Aorta (tissue), 5 donors: ENCODE measurements at regions of chr12 and their contacts with region 1.

Region 1: DNA sequence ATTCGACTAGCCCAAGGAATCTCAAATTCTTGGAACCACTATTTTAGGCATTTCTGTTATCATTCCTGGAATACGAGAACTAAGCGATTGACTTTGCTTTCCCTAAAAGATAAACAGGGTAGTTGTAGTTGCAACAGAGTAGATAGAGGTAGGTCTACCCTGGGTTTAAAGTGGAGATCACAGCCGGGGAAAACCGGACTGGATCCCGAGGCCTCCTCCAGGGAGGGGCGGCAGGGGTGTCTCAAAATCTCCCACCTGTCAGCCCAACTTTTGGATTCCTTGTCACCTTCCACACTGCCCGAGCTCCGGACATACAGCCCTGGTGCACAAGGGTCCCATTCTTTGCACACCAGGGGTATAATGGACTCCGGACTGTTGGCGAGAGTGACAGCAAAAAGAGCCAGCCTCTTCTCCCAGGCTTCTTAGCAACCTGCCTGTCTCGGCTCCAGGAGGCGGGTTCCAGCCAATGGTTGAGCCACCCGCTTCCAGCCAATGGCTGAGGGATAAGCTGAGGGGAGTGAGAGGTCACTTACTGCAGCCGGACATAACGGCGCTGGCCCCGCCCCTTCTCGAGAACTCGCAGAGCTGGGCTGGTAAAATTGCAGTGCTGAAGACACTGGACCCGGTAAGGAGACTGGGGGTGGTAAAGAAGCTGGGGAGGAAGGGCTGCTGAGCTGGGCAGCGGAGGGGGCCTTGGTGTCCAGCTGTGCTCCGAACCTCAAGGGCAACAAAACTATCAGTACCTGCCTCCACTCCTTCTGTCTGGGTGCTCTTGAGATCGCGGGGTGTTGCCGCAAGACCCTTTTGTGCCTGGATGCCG is at the start of gene SUOX:
- DNase-seq: peak; percentile 98
- ATAC-seq: peak; percentile 99
- H3K4me3 ChIP-seq: peak within 1 kb of the TSS; percentile 47 to 85
- H3K27ac ChIP-seq: peak within 1 kb of the TSS in 1 of 2 donors; percentile 65
- H3K4me1 ChIP-seq: no peaks in the 10 kb centered on the region
- H3K27me3 ChIP-seq: no peaks in the 10 kb centered on the region
- total RNA-seq, gene SUOX: 17.7 to 18.3 TPM

Region 2: DNA sequence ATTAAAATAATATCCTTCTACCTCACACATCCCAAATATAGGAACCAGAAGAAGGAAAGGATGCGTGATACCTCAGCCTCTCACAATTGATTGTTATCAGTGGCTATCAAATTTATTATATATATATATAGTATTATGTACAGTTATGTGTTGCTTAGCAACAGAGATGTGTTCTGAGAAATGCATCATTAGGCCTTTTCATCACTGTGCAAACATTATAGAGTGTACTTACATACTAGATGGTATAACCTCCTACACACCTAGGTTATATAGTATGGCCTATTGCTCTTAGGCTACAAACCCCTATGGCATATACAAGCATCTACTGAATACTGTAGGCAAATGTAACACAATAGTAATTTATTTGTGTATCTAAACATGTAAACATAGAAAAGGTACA is 103.2 kb before region 1 on chr12:
- intact Hi-C with region 1: no loop called
- DNase-seq: no peak
- ATAC-seq: no peak
- H3K4me3 ChIP-seq: no peak overlapping the region
- H3K27ac ChIP-seq: no peak overlapping the region
- H3K4me1 ChIP-seq: no peaks in the 10 kb centered on the region
- H3K27me3 ChIP-seq: no peaks in the 10 kb centered on the region

Region 3: GRCh38 chr12:56029666-56030293 is 32.9 kb after region 1 on chr12:
- intact Hi-C with region 1: loop called in 1 of 2 experiments (anchors 5 kb)
- DNase-seq: peak in 1 of 2 donors; percentile 60
- ATAC-seq: no peak
- H3K4me3 ChIP-seq: no peak overlapping the region
- H3K27ac ChIP-seq: no peak overlapping the region
- H3K4me1 ChIP-seq: no peaks in the 10 kb centered on the region
- H3K27me3 ChIP-seq: no peaks in the 10 kb centered on the region

Region 4: DNA sequence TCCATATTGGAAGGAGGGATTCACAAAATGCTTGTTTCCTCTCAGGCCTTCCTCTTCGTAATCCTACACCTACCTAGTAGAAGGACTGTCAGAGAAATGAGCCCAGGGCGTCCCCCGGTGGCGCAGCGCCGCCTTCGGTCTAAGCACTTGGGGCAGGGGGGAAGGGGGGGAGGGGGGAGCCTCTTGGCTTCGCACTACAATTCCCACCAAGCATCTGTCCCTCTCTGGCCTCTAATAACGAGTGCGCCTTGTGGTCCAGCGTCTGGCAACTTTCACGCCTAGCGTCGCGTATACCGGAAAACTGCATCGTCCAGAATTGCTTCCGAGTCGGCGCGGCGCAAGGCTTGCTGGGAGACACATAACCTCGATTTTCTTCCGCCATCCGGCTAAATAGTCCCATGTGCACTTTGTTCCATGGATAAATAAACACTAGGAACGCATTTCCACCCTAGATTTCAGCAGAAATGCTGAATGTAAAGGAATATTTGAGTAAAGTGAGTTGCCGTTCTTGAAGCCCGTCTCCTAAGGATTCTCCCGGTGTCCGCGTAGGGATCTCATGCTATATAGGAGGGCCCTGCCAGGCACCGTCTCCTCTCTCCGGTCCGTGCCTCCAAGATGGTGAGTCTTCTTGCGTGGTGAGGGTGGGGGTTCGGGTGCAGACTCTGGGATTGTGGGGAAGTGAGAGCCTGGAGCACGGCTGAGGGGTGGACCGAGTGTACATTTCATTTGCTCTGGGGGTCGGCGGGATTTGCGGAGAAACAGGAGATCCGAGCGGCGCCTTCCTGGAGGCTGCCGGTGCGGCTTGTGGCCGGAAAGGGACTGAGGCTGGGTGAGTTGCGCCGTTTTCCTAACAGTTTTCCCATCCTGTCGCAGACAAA is 44.9 kb after region 1 on chr12 and contains the start of gene RPS26:
- intact Hi-C with region 1: loop called in 1 of 2 experiments (anchors 5 kb)
- DNase-seq: peak; percentile 97 to 98
- ATAC-seq: peak; percentile 98
- H3K4me3 ChIP-seq: peak within 1 kb of the TSS; percentile 64 to 75
- H3K27ac ChIP-seq: peak within 1 kb of the TSS; percentile 67 to 69
- H3K4me1 ChIP-seq: peaks cover 2 to 3% of the 10 kb centered on the region in 2 donors
- H3K27me3 ChIP-seq: no peaks in the 10 kb centered on the region
- total RNA-seq, gene RPS26: 40.5 to 69.1 TPM